GM12878 (cell line): ENCODE measurements at regions of chr11 and their contacts with region 1.

Region 1: GRCh38 chr11:120710354-120711131 is 199.0 kb downstream of the GRIK4 start:
- DNase-seq: no peak
- ATAC-seq: peak; percentile 45
- H3K4me3 ChIP-seq: peak overlapping the region; percentile 12; the same call in 1 of the 2 replicates
- H3K27ac ChIP-seq: peak overlapping the region; percentile 63
- H3K4me1 ChIP-seq: peaks cover 47% of the 10 kb centered on the region
- H3K27me3 ChIP-seq: no peaks in the 10 kb centered on the region
- CTCF ChIP-seq: no peak
- EP300 ChIP-seq: no peak
- POLR2A ChIP-seq: no peak
- RAD21 ChIP-seq: no peak

Region 2: DNA sequence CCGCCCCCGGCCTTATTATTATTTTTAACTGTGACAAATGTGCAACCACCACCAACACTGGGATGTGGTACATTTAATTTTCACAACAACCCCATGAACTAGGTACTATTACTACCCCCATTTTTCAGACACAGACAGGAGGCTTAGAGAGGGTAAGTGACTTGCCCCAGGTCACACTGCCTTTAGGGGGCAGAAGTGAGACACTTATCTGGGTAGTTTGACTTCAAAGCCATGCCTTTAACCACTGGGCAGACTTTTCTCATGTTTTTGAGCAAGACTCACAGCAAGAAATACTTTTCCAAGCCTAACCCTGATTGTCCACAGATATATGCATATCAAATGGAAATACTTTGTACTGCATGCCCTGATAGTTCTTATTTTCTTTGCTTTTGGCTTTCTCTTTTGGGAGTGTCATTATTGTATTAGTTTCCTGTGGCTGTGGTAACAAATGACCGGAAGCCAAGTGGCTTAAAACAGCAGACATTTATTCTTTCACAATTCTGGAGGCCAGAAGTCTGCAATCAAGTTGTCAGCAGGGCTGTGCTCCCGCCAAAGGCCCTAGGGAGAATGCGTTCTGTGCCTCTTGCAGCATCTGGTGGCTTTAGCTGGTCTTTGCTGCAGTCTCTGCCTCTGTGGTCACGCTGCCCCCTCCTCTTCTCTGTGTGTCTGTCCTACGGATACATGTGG is 88.2 kb before region 1 on chr11:
- CTCF ChIA-PET with region 1: interaction called, 12 read pairs
- POLR2A ChIA-PET with region 1: no interaction called
- RAD21 ChIA-PET with region 1: no interaction called
- SMC1A ChIA-PET with region 1: interaction called, 3 read pairs
- in situ Hi-C with region 1: no loop called
- intact Hi-C with region 1: no loop called
- DNase-seq: no peak
- ATAC-seq: peak; percentile 89
- H3K4me3 ChIP-seq: no peak overlapping the region
- H3K27ac ChIP-seq: no peak overlapping the region; the same call in 1 of the 2 replicates
- H3K4me1 ChIP-seq: peaks cover 6% of the 10 kb centered on the region; the same call in 1 of the 2 replicates
- H3K27me3 ChIP-seq: no peaks in the 10 kb centered on the region
- CTCF ChIP-seq: peak; percentile 35 to 56 (median 54)
- EP300 ChIP-seq: no peak
- POLR2A ChIP-seq: no peak
- RAD21 ChIP-seq: peak; percentile 36

Region 3: GRCh38 chr11:120667281-120667680 is 43.3 kb before region 1 on chr11:
- CTCF ChIA-PET with region 1: interaction called, 10 read pairs
- POLR2A ChIA-PET with region 1: no interaction called
- RAD21 ChIA-PET with region 1: no interaction called
- SMC1A ChIA-PET with region 1: no interaction called
- in situ Hi-C with region 1: no loop called
- intact Hi-C with region 1: no loop called
- DNase-seq: no peak
- ATAC-seq: no peak; the same call in 2 of the 3 replicates
- H3K4me3 ChIP-seq: no peak overlapping the region
- H3K27ac ChIP-seq: no peak overlapping the region
- H3K4me1 ChIP-seq: no peaks in the 10 kb centered on the region
- H3K27me3 ChIP-seq: no peaks in the 10 kb centered on the region; a peak in 1 of 4 replicates
- CTCF ChIP-seq: no peak
- EP300 ChIP-seq: no peak
- POLR2A ChIP-seq: no peak
- RAD21 ChIP-seq: no peak

Region 4: GRCh38 chr11:120696597-120697218 is 13.8 kb before region 1 on chr11:
- CTCF ChIA-PET with region 1: interaction called, 21 read pairs
- POLR2A ChIA-PET with region 1: no interaction called
- RAD21 ChIA-PET with region 1: interaction called, 7 read pairs
- SMC1A ChIA-PET with region 1: interaction called, 50 read pairs
- in situ Hi-C with region 1: no loop called
- intact Hi-C with region 1: no loop called
- DNase-seq: no peak
- ATAC-seq: peak; percentile 32; the same call in 1 of the 3 replicates
- H3K4me3 ChIP-seq: no peak overlapping the region
- H3K27ac ChIP-seq: no peak overlapping the region
- H3K4me1 ChIP-seq: peaks cover 1% of the 10 kb centered on the region; the same call in 1 of the 2 replicates
- H3K27me3 ChIP-seq: no peaks in the 10 kb centered on the region
- CTCF ChIP-seq: peak in 2 of 3 experiments; percentile 18 to 40; a peak in 3 of 6 replicates
- EP300 ChIP-seq: no peak
- POLR2A ChIP-seq: no peak
- RAD21 ChIP-seq: no peak